Activated CD8-positive, alpha-beta T cell treated with anti-CD3 and anti-CD28 coated beads, Interleukin-2, amount 10 ng/mL, durations not matched to agents 7 days and 5 days (primary cell): ENCODE measurements at regions of chr19 and their contacts with region 1.

Region 1: GRCh38 chr19:42132851-42133528 is 744 bp upstream of the POU2F2 start:
- DNase-seq: peak; percentile 82
- ATAC-seq: peak; percentile 71
- H3K4me3 Mint-ChIP-seq: peak overlapping the region; percentile 86
- H3K27ac Mint-ChIP-seq: peak overlapping the region; percentile 65
- H3K4me1 Mint-ChIP-seq: peaks cover 65% of the 10 kb centered on the region
- H3K27me3 Mint-ChIP-seq: no peaks in the 10 kb centered on the region

Region 2: DNA sequence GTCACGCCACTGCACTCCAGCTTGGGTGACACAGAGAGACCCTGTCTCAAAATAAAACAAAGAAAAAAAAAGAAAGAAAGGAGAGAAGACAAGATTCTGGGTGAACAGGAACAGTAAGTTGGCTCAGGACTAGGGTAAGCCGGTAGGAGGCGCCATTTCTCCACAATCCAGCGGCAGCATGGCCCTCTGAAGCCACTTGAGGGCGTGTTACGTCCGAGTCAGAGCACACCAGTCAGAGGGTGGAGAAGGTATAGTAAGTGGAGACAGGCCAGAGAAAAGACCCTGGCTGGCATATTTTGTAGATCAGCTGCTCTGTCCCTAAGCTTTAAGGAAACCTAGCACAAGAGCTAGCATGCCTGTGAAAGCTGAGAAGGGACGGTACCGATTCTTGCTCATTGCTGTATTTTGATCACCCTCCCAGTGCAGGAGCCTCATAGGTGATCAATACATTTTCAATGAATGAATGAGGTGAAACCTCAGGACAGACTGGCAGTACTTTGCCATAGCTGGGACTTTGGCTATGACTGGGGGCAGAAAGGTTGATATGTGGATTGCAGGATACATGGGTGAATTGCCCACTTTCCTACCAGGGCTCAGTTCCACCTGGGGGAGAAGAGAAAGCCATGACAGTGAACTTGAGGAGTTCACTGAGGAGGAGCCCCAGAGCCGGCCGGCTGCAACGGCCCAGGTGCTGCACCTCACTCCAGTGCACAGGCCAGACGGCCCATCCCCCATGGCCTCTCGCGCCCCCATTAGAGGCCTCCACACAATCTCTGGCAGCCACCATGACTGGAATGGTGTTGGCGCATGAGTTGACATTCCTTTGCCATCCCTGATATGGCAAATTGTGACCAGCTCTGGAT is 24.2 kb before region 1 on chr19:
- CTCF ChIA-PET with region 1: interaction called, 22 read pairs
- POLR2A ChIA-PET with region 1: no interaction called
- DNase-seq: peak; percentile 94
- ATAC-seq: peak; percentile 94
- H3K4me3 Mint-ChIP-seq: no peak overlapping the region
- H3K27ac Mint-ChIP-seq: peak overlapping the region; percentile 26
- H3K4me1 Mint-ChIP-seq: peaks cover 33% of the 10 kb centered on the region
- H3K27me3 Mint-ChIP-seq: no peaks in the 10 kb centered on the region

Region 3: GRCh38 chr19:42176990-42177685 is 44.1 kb after region 1 on chr19:
- CTCF ChIA-PET with region 1: interaction called, 30 read pairs
- POLR2A ChIA-PET with region 1: no interaction called
- DNase-seq: peak; percentile 79
- ATAC-seq: peak; percentile 96
- H3K4me3 Mint-ChIP-seq: no peak overlapping the region
- H3K27ac Mint-ChIP-seq: no peak overlapping the region
- H3K4me1 Mint-ChIP-seq: peaks cover 15% of the 10 kb centered on the region
- H3K27me3 Mint-ChIP-seq: peaks cover 33% of the 10 kb centered on the region

Region 4: DNA sequence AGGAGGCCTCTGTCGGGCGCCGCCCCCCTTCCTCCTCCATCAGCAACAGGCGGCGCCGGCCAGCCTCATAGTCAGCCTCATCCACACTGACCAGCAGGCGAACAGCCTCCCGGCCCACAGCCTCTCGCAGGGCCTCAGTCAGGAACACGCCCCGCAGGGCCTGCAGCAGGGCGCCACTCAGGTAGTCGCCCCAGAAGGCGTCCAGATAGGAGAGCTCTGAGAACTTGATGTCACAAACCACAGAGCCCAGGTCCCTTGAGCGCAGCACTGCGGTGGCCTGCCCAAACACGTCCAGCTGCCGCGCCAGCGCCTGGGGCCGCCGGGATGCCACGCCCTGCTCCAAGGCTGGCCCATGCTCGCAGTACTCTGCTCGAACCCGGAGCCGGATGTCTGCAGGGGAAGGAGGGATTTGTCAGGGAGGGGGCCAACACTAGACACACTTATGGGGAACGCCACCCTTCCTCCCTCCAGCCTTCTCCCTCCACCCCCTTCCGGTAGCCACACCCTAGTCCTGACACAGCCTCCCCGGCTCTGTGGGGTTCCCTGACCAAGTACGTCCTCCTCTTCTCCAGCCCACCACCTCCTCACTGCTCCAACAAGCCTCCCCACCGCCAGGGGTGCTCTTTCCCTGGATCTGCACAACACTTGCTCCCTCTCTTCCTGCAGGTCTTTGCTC is 66.6 kb after region 1 on chr19:
- CTCF ChIA-PET with region 1: interaction called, 14 read pairs
- POLR2A ChIA-PET with region 1: interaction called, 5 read pairs
- DNase-seq: peak; percentile 92
- ATAC-seq: peak; percentile 74
- H3K4me3 Mint-ChIP-seq: peak overlapping the region; percentile 72
- H3K27ac Mint-ChIP-seq: peak overlapping the region; percentile 96
- H3K4me1 Mint-ChIP-seq: peaks cover 80% of the 10 kb centered on the region
- H3K27me3 Mint-ChIP-seq: no peaks in the 10 kb centered on the region

Region 5: DNA sequence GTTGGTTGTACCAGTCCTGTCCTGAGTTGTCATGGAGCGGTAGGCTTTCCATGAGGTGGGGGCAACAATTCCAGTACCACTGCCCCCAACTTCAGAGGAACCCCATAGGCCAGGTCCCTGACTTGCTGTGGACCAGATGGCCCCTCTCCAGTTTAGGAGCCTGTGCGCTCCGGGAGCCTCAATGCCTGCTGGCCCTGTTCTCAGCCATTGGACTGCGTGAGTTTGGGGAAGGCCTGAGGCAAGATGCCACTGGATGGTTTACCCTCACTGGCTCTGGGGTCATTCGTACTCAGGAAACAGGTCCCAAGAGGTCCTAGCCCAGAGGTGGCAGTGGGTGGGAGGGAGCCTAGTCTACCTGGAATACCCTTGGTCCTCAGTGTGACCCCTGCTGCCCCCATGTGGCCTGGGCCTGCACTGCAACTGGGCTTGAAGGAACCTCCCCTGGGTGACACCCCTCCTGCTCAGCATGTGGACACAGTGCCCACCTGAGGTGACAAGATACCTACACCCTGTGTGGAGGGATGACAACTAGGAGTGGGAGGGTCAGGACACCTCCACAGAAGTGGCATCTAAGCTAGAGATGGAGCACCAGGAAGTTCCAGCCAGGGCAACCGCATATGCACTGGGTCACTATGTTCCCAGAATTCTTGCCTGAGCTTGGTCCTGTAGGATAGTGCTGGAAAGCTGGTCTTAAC is 163.0 kb after region 1 on chr19:
- CTCF ChIA-PET with region 1: interaction called, 12 read pairs
- POLR2A ChIA-PET with region 1: no interaction called
- DNase-seq: peak; percentile 92
- ATAC-seq: peak; percentile 86
- H3K4me3 Mint-ChIP-seq: no peak overlapping the region
- H3K27ac Mint-ChIP-seq: no peak overlapping the region
- H3K4me1 Mint-ChIP-seq: peaks cover 10% of the 10 kb centered on the region
- H3K27me3 Mint-ChIP-seq: no peaks in the 10 kb centered on the region